ENCODE measurements at regions of chr7 and their contacts with region 1.

Region 1: DNA sequence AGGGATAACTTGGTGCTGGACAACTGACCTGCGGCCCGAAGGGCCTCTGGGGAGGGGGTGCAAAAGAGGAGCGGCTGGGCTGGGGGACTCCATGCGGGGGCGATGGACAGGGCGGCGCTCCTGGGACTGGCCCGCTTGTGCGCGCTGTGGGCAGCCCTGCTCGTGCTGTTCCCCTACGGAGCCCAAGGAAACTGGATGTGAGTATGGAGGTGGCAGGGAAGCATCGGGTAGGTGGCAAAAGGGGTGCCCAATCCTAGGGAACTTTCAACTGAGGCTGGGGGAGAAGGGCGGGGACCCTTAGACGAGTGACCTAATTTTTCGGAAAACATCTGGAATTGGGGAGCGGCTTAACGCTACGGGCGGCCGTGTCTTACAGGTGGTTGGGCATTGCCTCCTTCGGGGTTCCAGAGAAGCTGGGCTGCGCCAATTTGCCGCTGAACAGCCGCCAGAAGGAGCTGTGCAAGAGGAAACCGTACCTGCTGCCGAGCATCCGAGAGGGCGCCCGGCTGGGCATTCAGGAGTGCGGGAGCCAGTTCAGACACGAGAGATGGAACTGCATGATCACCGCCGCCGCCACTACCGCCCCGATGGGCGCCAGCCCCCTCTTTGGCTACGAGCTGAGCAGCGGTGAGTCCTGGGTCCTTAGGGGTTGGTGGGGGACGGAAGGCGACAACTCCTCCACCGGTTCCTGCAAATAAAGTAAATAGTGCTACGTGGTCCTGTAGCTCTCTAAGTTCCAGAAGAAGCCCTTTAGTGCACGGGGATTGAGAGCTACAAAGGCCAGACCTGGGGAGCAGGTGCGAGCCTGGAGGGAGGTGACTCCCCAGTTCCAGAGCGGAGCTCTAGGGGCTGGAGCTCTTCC is 622 bp downstream of the WNT16 start:
- DNase-seq: no peak
- ATAC-seq: no peak
- H3K4me3 ChIP-seq: no peak overlapping the region
- H3K27ac ChIP-seq: no peak overlapping the region
- H3K4me1 ChIP-seq: no peaks in the 10 kb centered on the region
- H3K27me3 ChIP-seq: peaks cover 49% of the 10 kb centered on the region
- CTCF ChIP-seq: no peak

Region 2: DNA sequence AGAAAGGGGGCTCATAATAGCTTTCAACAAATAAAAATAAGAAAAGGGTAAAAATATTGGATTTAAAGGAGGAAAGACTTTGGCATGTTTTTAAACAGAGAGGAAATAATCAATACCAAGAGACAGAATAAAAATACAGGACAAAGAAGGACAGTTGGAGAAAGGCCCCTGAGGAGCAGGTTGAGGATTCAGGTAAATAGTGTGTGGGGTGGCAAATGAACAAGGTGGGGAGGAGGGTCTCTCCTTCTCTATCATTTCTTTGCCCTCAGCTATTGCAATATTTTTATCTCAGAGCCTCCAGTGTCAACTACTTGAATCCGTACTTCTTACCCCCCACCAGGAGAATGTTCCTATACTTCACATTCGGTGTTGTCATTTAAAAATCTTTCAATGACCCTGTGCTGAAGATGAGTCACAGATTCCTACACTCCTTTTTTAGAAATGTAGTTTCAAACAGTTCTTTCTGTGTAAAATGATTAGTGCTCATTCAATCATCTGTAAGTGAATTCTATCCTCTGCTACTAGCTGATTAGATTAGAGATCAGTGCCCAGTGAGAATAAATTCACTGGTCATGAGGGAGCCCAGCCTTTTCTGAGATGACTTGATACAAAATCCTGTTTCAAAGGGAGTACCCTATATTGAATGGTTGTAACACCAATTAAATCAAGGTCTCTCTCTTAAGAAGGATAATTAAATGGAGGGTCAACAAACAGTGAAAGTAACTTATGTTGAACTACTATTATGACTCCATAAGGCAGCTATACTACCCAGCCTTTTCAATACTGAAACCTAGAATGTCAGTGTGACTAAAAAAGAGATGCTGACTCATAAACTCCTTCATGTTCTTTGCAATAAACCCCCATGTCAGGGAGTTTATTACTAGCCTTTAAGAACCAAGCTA is 51.1 kb before region 1 on chr7:
- CTCF ChIA-PET with region 1: no interaction called
- POLR2A ChIA-PET with region 1: no interaction called
- intact Hi-C with region 1: loop called (anchors 10 kb)
- DNase-seq: peak; percentile 57
- ATAC-seq: peak; percentile 63
- H3K4me3 ChIP-seq: no peak overlapping the region
- H3K27ac ChIP-seq: no peak overlapping the region
- H3K4me1 ChIP-seq: peaks cover 7% of the 10 kb centered on the region
- H3K27me3 ChIP-seq: no peaks in the 10 kb centered on the region
- CTCF ChIP-seq: no peak

Region 3: GRCh38 chr7:121395961-121396757 is 66.7 kb after region 1 on chr7 and contains the start of gene FAM3C:
- CTCF ChIA-PET with region 1: no interaction called
- POLR2A ChIA-PET with region 1: no interaction called
- intact Hi-C with region 1: no loop called
- DNase-seq: peak; percentile 93
- ATAC-seq: peak; percentile 93
- H3K4me3 ChIP-seq: peak within 1 kb of the TSS; percentile 80
- H3K27ac ChIP-seq: peak within 1 kb of the TSS; percentile 60
- H3K4me1 ChIP-seq: peaks cover 14% of the 10 kb centered on the region
- H3K27me3 ChIP-seq: no peaks in the 10 kb centered on the region
- CTCF ChIP-seq: peak; percentile 71
- total RNA-seq, gene FAM3C: 37.7 and 37.9 TPM in 2 replicates

Region 4: GRCh38 chr7:121882731-121883130 is 553.3 kb after region 1 on chr7:
- CTCF ChIA-PET with region 1: no interaction called
- POLR2A ChIA-PET with region 1: no interaction called
- intact Hi-C with region 1: no loop called
- DNase-seq: no peak
- ATAC-seq: no peak
- H3K4me3 ChIP-seq: no peak overlapping the region
- H3K27ac ChIP-seq: no peak overlapping the region
- H3K4me1 ChIP-seq: no peaks in the 10 kb centered on the region
- H3K27me3 ChIP-seq: peaks cover 23% of the 10 kb centered on the region; the same call in 1 of the 2 replicates
- CTCF ChIP-seq: no peak